Natural killer cell (primary cell): ENCODE measurements at regions of chr6 and their contacts with region 1.

Region 1: GRCh38 chr6:13383328-13384163 is 55.2 kb upstream of the TBC1D7 start:
- DNase-seq: peak; percentile 45 to 73
- ATAC-seq: peak; percentile 95 to 99 (median 98)
- H3K4me3 ChIP-seq: no peak overlapping the region
- H3K4me3 Mint-ChIP-seq: peak overlapping the region; percentile 79
- H3K27ac ChIP-seq: peak overlapping the region; percentile 90
- H3K27ac Mint-ChIP-seq: peak overlapping the region; percentile 73 to 96
- H3K4me1 ChIP-seq: peaks cover 48% of the 10 kb centered on the region
- H3K4me1 Mint-ChIP-seq: peaks cover 91 to 98% of the 10 kb centered on the region in 2 donors
- H3K27me3 ChIP-seq: no peaks in the 10 kb centered on the region
- H3K27me3 Mint-ChIP-seq: no peaks in the 10 kb centered on the region
- CTCF ChIP-seq: no peak

Region 2: GRCh38 chr6:13336553-13336952 is 47.0 kb before region 1 on chr6:
- intact Hi-C with region 1: loop called (anchors 10 kb)
- DNase-seq: peak; percentile 77 to 86
- ATAC-seq: peak; percentile 81 to 88 (median 87)
- H3K4me3 ChIP-seq: no peak overlapping the region
- H3K4me3 Mint-ChIP-seq: peak overlapping the region; percentile 1
- H3K27ac ChIP-seq: no peak overlapping the region
- H3K27ac Mint-ChIP-seq: peak overlapping the region; percentile 6 to 46
- H3K4me1 ChIP-seq: peaks cover 24% of the 10 kb centered on the region
- H3K4me1 Mint-ChIP-seq: peaks cover 23 to 25% of the 10 kb centered on the region in 2 donors
- H3K27me3 ChIP-seq: no peaks in the 10 kb centered on the region
- H3K27me3 Mint-ChIP-seq: no peaks in the 10 kb centered on the region
- CTCF ChIP-seq: peak; percentile 97

Region 3: GRCh38 chr6:13349811-13350506 is 33.6 kb before region 1 on chr6:
- intact Hi-C with region 1: no loop called
- DNase-seq: no peak
- ATAC-seq: no peak
- H3K4me3 ChIP-seq: no peak overlapping the region
- H3K4me3 Mint-ChIP-seq: no peak overlapping the region
- H3K27ac ChIP-seq: no peak overlapping the region
- H3K27ac Mint-ChIP-seq: no peak overlapping the region
- H3K4me1 ChIP-seq: peaks cover 13% of the 10 kb centered on the region
- H3K4me1 Mint-ChIP-seq: peaks cover 16 to 17% of the 10 kb centered on the region in 2 donors
- H3K27me3 ChIP-seq: no peaks in the 10 kb centered on the region
- H3K27me3 Mint-ChIP-seq: no peaks in the 10 kb centered on the region
- CTCF ChIP-seq: no peak

Region 4: DNA sequence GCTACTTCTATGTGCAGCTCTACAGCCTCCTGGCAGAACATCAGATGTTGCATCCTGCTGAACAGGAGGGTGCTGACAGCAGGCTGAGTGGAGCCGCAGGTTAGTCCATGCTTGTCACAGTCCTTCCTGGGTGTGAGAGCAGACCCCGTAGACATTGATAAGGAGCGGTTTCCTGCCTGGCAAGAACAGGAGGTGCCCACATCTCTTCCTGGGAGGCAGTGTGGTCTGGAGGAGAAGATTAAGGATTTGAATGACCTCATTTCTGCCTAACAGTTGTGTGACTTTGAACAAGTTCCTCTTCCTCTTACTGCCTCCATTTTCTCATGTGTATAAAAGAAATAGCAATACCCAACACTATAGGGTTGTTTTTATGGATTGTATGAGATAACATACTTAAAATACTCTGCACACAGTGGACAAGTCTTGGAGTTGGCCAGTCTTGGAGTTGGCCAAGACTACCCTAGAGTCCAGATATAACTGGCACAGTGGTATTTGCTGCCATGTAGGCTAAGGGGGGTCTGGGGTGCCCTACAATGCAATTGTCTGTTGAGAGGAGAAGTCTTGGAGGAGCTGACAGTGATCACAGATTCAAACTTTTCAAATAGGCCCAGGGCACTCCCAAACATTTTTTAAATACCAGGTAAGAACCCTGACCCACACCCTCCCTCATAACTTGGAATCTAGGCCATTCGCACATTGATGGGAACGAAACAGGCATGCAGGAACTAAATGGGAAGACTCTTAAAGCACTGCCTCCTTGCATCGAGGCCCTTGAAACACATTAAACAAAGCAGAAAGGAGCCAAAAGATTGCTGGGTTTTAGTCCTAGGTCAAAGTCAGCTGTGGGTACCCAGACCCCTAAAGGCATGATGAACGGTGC is 22.6 kb before region 1 on chr6:
- intact Hi-C with region 1: no loop called
- DNase-seq: no peak
- ATAC-seq: no peak
- H3K4me3 ChIP-seq: no peak overlapping the region
- H3K4me3 Mint-ChIP-seq: no peak overlapping the region
- H3K27ac ChIP-seq: no peak overlapping the region
- H3K27ac Mint-ChIP-seq: peak overlapping the region; percentile 43 to 94
- H3K4me1 ChIP-seq: peaks cover 17% of the 10 kb centered on the region
- H3K4me1 Mint-ChIP-seq: peaks cover 41 to 47% of the 10 kb centered on the region in 2 donors
- H3K27me3 ChIP-seq: no peaks in the 10 kb centered on the region
- H3K27me3 Mint-ChIP-seq: no peaks in the 10 kb centered on the region
- CTCF ChIP-seq: no peak

Region 5: GRCh38 chr6:13681305-13682061 is 297.9 kb after region 1 on chr6:
- intact Hi-C with region 1: no loop called
- DNase-seq: peak in 1 of 2 donors; percentile 72
- ATAC-seq: peak; percentile 54 to 73 (median 69)
- H3K4me3 ChIP-seq: no peak overlapping the region
- H3K4me3 Mint-ChIP-seq: peak overlapping the region; percentile 83
- H3K27ac ChIP-seq: peak overlapping the region; percentile 61
- H3K27ac Mint-ChIP-seq: peak overlapping the region; percentile 91 to 93
- H3K4me1 ChIP-seq: peaks cover 15% of the 10 kb centered on the region
- H3K4me1 Mint-ChIP-seq: peaks cover 52 to 54% of the 10 kb centered on the region in 2 donors
- H3K27me3 ChIP-seq: no peaks in the 10 kb centered on the region
- H3K27me3 Mint-ChIP-seq: no peaks in the 10 kb centered on the region
- CTCF ChIP-seq: no peak